ENCODE measurements at regions of chr13 and their contacts with region 1.

Region 1: DNA sequence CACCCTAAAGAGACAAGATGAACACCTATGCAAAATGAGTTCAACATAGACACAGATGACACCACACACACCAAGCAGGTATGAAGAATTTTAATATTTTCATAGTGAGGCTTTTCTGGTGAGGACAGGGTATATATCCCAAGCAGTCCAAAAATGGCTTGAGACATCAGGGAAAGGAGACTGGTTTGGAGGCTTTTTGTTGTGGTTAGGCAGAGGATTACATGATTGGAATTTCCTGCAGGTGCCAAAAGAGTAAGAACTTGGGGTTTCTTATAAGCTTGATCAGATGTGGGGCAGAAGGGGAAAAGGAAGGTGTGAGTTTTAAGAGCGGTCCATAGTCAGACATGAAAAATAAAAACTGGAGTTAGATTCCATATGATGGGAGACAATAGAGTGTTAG is 420.8 kb upstream of the SLITRK1 start:
- DNase-seq: no peak
- ATAC-seq: no peak
- H3K4me3 ChIP-seq: no peak overlapping the region
- H3K27ac ChIP-seq: no peak overlapping the region
- H3K4me1 ChIP-seq: 0 out of 2 replicates have a peak, but pooled peaks cover 6% of the 10 kb centered on the region
- H3K27me3 ChIP-seq: no peaks in the 10 kb centered on the region
- CTCF ChIP-seq: no peak
- EP300 ChIP-seq: no peak
- POLR2A ChIP-seq: no peak
- RAD21 ChIP-seq: no peak

Region 2: DNA sequence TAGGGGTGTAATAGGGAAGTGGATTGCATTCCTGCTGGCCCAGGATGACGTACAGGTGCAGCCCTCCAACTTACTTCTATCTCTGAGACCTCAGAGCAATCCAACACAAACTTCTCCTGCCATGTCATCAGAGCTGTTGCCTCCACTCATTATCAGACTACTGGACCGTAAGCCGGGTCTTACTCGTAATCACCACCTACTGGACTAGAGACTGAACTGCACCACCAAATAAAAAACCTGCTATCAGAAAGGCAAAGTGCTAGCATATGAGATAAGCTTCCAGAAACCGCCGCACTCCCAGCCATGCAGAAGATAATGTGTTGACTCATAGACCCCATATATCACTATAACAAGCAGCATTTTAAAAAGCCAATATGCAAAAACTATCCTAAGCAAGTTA is 522.8 kb before region 1 on chr13:
- CTCF ChIA-PET with region 1: no interaction called
- POLR2A ChIA-PET with region 1: no interaction called
- in situ Hi-C with region 1: no loop called
- intact Hi-C with region 1: no loop called
- DNase-seq: peak; percentile 27
- ATAC-seq: peak; percentile 82
- H3K4me3 ChIP-seq: no peak overlapping the region
- H3K27ac ChIP-seq: no peak overlapping the region
- H3K4me1 ChIP-seq: no peaks in the 10 kb centered on the region
- H3K27me3 ChIP-seq: no peaks in the 10 kb centered on the region
- CTCF ChIP-seq: peak; percentile 38
- EP300 ChIP-seq: no peak
- POLR2A ChIP-seq: no peak
- RAD21 ChIP-seq: no peak

Region 3: GRCh38 chr13:84243340-84243739 is 59.7 kb before region 1 on chr13:
- CTCF ChIA-PET with region 1: no interaction called
- POLR2A ChIA-PET with region 1: no interaction called
- in situ Hi-C with region 1: no loop called
- intact Hi-C with region 1: no loop called
- DNase-seq: no peak
- ATAC-seq: no peak
- H3K4me3 ChIP-seq: no peak overlapping the region
- H3K27ac ChIP-seq: no peak overlapping the region
- H3K4me1 ChIP-seq: no peaks in the 10 kb centered on the region
- H3K27me3 ChIP-seq: no peaks in the 10 kb centered on the region
- CTCF ChIP-seq: no peak
- EP300 ChIP-seq: no peak
- POLR2A ChIP-seq: no peak
- RAD21 ChIP-seq: no peak

Region 4: GRCh38 chr13:84487752-84488151 is 184.7 kb after region 1 on chr13:
- CTCF ChIA-PET with region 1: no interaction called
- POLR2A ChIA-PET with region 1: no interaction called
- in situ Hi-C with region 1: no loop called
- intact Hi-C with region 1: loop called (anchors 5 kb)
- DNase-seq: no peak
- ATAC-seq: no peak
- H3K4me3 ChIP-seq: no peak overlapping the region
- H3K27ac ChIP-seq: no peak overlapping the region
- H3K4me1 ChIP-seq: no peaks in the 10 kb centered on the region
- H3K27me3 ChIP-seq: no peaks in the 10 kb centered on the region; a peak in 1 of 5 replicates
- CTCF ChIP-seq: no peak
- EP300 ChIP-seq: no peak
- POLR2A ChIP-seq: no peak
- RAD21 ChIP-seq: no peak

Measured in HepG2 (cell line).